Activated T-helper 1 cell treated with anti-CD3 and anti-CD28 coated beads, Interleukin-12 subunit alpha, Interleukin-12 subunit beta, Interleukin-2, Interleukin-4 antibody, amounts not matched to agents 30 ng/mL and 10 ng/mL and 1 ng/mL, durations not matched to agents 14 hours and 24 hours and 36 hours (primary cell): ENCODE measurements at regions of chr11 and their contacts with region 1.

Region 1: DNA sequence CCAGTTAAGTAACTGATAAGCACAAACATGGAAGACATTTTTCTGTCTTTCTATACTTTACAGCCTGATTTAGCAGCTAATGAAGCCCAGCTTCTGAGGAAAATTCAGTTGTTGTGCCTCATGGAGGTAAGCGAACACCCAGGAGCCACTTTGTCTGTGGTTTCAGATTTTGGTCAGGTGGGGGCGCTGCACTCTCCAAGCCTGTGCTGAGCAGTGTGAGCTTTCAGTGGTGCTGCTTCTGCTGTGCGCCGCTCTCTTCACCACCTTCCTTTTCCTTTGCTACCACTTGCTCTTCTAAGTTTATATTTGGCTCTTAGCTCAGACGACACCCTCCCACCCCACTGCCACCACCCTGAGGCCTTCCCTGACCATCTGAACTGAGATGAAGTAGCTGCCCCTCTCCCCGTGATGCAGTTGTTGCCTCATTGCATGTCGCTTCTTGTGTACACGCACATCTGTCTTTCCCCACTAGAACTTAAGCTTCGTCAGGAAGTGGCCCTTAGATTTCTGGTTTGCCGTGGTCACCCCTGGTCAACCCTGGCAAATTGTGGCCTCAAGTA is 14.0 kb downstream of the PSMD13 start:
- DNase-seq: peak; percentile 65
- H3K4me3 Mint-ChIP-seq: no peak overlapping the region
- H3K27ac Mint-ChIP-seq: peak overlapping the region; percentile 1
- H3K4me1 Mint-ChIP-seq: peaks cover 26% of the 10 kb centered on the region
- H3K27me3 Mint-ChIP-seq: no peaks in the 10 kb centered on the region

Region 2: GRCh38 chr11:288328-289144 is 37.7 kb after region 1 on chr11 and contains the start of gene PGGHG:
- intact Hi-C with region 1: loop called (anchors 5 kb)
- DNase-seq: peak; percentile 68
- H3K4me3 Mint-ChIP-seq: peak within 1 kb of the TSS; percentile 95
- H3K27ac Mint-ChIP-seq: peak within 1 kb of the TSS; percentile 98
- H3K4me1 Mint-ChIP-seq: peaks cover 37% of the 10 kb centered on the region
- H3K27me3 Mint-ChIP-seq: peaks cover 6% of the 10 kb centered on the region
- total RNA-seq, gene PGGHG: 164 and 167 TPM in 2 replicates

Region 3: GRCh38 chr11:346529-346928 is 95.7 kb after region 1 on chr11:
- intact Hi-C with region 1: no loop called
- DNase-seq: no peak
- H3K4me3 Mint-ChIP-seq: no peak overlapping the region
- H3K27ac Mint-ChIP-seq: no peak overlapping the region
- H3K4me1 Mint-ChIP-seq: peaks cover 19% of the 10 kb centered on the region
- H3K27me3 Mint-ChIP-seq: peaks cover 22% of the 10 kb centered on the region